Adrenal gland (tissue), 19 donors: ENCODE measurements at regions of chr19 and their contacts with region 1.

Region 1: GRCh38 chr19:16180611-16181010 is 4.6 kb upstream of the FAM32A start:
- DNase-seq: no peak
- H3K4me3 ChIP-seq: no peak overlapping the region
- H3K27ac ChIP-seq: no peak overlapping the region
- H3K4me1 ChIP-seq: no peaks in the 10 kb centered on the region
- H3K27me3 ChIP-seq: no peaks in the 10 kb centered on the region
- CTCF ChIP-seq: no peak
- POLR2A ChIP-seq: no peak

Region 2: DNA sequence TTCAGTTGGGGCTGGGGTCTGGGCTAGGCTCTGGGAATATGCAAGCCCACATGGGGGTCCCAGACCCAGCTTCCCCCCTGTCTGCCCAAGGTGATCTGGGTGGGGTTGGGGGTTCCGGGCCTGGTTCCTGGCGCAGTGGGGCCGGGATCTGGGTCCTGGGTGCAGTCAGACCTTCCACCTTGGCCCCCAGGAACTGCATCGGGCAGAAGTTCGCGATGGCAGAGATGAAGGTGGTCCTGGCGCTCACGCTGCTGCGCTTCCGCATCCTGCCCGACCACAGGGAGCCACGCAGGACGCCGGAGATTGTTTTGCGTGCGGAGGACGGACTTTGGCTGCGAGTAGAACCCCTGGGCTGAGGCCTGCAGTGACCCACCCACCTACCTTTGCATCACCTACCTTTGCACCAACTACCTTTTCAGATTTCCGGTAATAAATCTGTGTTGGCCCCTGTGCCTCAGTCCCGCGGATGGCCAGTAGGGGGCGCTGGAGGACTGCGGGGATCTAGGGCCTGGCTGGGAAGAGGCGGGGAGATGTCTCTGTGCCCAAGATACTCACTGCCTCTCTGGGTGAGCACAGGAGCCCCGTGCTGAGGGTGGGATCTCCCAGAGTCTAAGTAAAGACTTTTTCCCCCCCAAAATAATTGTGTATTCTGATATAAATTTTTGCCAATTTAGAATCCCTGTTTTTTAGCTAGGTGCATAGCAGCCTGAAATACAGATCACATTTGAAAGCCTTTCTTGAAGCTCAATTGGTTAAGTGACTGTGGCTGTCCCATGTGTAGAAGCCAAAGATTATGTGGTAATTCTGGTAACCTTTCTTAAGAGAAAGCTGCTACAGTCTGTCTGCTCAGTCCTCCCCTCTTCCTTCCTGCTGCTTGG is 551.4 kb before region 1 on chr19:
- intact Hi-C with region 1: loop called in 1 of 2 experiments (anchors 5 kb)
- DNase-seq: peak; percentile 62 to 86 (median 78)
- H3K4me3 ChIP-seq: no peak overlapping the region
- H3K27ac ChIP-seq: no peak overlapping the region
- H3K4me1 ChIP-seq: no peaks in the 10 kb centered on the region
- H3K27me3 ChIP-seq: peaks cover 9% of the 10 kb centered on the region
- CTCF ChIP-seq: peak; percentile 93 to 98 (median 97)
- POLR2A ChIP-seq: no peak

Region 3: GRCh38 chr19:16025108-16026101 is 155.2 kb before region 1 on chr19:
- intact Hi-C with region 1: loop called in 1 of 2 experiments (anchors 5 kb)
- DNase-seq: peak; percentile 32 to 78 (median 72)
- H3K4me3 ChIP-seq: no peak overlapping the region
- H3K27ac ChIP-seq: no peak overlapping the region
- H3K4me1 ChIP-seq: no peaks in the 10 kb centered on the region
- H3K27me3 ChIP-seq: no peaks in the 10 kb centered on the region
- CTCF ChIP-seq: peak in 5 of 6 experiments; percentile 25 to 63 (median 40)
- POLR2A ChIP-seq: no peak

Region 4: DNA sequence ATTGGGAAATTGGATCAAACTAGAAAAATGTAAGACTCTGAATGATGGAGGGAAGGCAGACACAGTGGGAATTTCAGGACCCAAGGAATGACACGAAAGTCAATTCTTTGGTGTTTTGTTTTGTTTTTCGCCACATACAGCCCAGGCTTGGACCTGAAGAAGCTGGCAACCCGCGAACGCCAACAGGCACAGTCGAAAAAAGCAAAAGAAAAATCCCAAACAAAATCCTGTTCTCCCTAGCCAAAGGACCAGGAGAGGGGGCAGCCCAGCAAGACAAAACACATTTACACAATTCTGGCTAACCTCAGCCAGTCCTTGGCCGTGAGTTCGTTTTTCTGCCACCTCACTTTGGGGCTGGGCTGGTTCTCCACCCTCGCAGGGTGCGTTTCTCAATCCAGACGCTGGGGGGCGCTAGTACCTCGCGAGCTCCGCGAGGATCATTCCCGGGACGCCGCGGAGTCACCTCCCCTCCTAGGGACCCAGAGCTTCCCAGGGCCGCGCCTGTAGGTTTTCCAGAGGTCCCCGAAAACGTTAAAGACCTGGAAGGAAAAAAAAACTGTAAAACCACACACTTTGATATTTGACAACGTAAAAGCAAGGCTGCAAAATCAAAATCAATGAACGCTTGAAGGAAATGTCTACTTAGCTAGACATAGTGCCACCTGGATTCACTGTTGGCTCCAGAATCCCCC is 139.2 kb before region 1 on chr19:
- intact Hi-C with region 1: loop called (anchors 5 kb)
- DNase-seq: peak; percentile 75 to 89 (median 84)
- H3K4me3 ChIP-seq: no peak overlapping the region
- H3K27ac ChIP-seq: no peak overlapping the region
- H3K4me1 ChIP-seq: no peaks in the 10 kb centered on the region
- H3K27me3 ChIP-seq: no peaks in the 10 kb centered on the region
- CTCF ChIP-seq: peak; percentile 93 to 99 (median 96)
- POLR2A ChIP-seq: no peak

Region 5: GRCh38 chr19:16062789-16063188 is 117.8 kb before region 1 on chr19:
- intact Hi-C with region 1: no loop called
- DNase-seq: peak in 3 of 7 donors; percentile 62 to 76 (median 70)
- H3K4me3 ChIP-seq: no peak overlapping the region
- H3K27ac ChIP-seq: no peak overlapping the region
- H3K4me1 ChIP-seq: peaks cover 0 to 7% of the 10 kb centered on the region in 2 donors
- H3K27me3 ChIP-seq: no peaks in the 10 kb centered on the region
- CTCF ChIP-seq: peak; percentile 63 to 87 (median 78)
- POLR2A ChIP-seq: no peak

Region 6: DNA sequence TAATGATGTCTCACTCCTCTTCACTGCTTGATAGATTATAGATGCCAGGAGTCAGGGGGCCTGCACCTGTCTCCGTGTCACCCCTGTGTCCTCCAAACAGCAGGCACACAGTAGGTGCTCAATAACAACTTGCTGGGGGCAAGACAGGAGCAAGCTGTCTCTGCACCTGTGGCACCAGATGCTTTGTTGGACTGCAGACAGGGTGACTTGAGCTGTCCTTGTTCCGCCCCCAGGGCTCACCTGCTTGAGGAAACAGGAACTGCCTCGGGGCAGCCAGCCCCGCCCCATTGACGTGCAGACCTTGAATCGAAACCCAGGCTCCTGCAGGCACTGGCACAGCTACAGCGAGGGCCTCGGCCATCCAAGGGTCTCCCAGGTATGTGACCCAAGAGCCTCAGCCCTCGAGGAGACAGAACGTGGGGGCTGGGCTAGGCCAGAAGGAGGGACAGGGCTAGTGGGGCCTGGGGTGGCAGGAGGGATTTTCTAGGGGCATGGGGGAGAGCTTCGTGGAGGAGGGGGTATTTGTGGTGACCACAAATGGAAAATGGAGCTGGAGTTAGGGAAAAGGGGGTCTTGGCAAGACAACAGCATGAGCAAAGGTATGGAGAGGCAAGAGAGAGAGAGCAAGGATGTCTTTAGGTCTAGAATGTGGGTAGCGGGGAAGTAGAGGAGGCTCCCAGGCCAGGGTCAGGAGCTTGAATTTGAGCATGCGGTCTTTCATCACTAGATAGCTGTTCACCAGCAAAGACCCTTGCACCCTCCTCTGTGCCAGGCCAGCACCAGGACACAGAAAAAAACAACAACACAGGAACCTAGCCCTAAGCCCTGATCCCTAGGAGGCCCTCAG is 37.0 kb before region 1 on chr19 and contains the start of gene HSH2D:
- intact Hi-C with region 1: no loop called
- DNase-seq: peak; percentile 31 to 67 (median 61)
- H3K4me3 ChIP-seq: no peak within 1 kb of the TSS
- H3K27ac ChIP-seq: no peak within 1 kb of the TSS
- H3K4me1 ChIP-seq: no peaks in the 10 kb centered on the region
- H3K27me3 ChIP-seq: no peaks in the 10 kb centered on the region
- CTCF ChIP-seq: no peak
- POLR2A ChIP-seq: no peak
- total RNA-seq, gene HSH2D: 0.21 to 2.2 (median 0.86) TPM in 8 of 9 donors, not detected in the other